Spleen (tissue), 13 donors: ENCODE measurements at regions of chr1 and their contacts with region 1.

Region 1: GRCh38 chr1:180415985-180416633 is 86.3 kb downstream of the ACBD6 start:
- DNase-seq: no peak
- H3K4me3 ChIP-seq: no peak overlapping the region
- H3K27ac ChIP-seq: peak overlapping the region in 2 of 8 donors; percentile 26 to 39
- H3K4me1 ChIP-seq: peaks cover 0 to 13% (median 0%) of the 10 kb centered on the region in 6 donors
- H3K27me3 ChIP-seq: no peaks in the 10 kb centered on the region
- CTCF ChIP-seq: peak in 10 of 11 experiments; percentile 15 to 73 (median 58)
- POLR2A ChIP-seq: no peak

Region 2: GRCh38 chr1:180116964-180117763 is 298.9 kb before region 1 on chr1:
- intact Hi-C with region 1: no loop called
- DNase-seq: no peak
- H3K4me3 ChIP-seq: no peak overlapping the region
- H3K27ac ChIP-seq: peak overlapping the region in 1 of 8 donors; percentile 6
- H3K4me1 ChIP-seq: peaks cover 0 to 16% (median 3%) of the 10 kb centered on the region in 6 donors
- H3K27me3 ChIP-seq: no peaks in the 10 kb centered on the region
- CTCF ChIP-seq: no peak
- POLR2A ChIP-seq: no peak

Region 3: GRCh38 chr1:180188091-180188506 is 228.0 kb before region 1 on chr1:
- intact Hi-C with region 1: loop called (anchors 5 kb)
- DNase-seq: no peak
- H3K4me3 ChIP-seq: no peak overlapping the region
- H3K27ac ChIP-seq: no peak overlapping the region
- H3K4me1 ChIP-seq: peaks cover 0 to 55% (median 13%) of the 10 kb centered on the region in 6 donors
- H3K27me3 ChIP-seq: no peaks in the 10 kb centered on the region
- CTCF ChIP-seq: peak; percentile 20 to 76 (median 56)
- POLR2A ChIP-seq: no peak

Region 4: DNA sequence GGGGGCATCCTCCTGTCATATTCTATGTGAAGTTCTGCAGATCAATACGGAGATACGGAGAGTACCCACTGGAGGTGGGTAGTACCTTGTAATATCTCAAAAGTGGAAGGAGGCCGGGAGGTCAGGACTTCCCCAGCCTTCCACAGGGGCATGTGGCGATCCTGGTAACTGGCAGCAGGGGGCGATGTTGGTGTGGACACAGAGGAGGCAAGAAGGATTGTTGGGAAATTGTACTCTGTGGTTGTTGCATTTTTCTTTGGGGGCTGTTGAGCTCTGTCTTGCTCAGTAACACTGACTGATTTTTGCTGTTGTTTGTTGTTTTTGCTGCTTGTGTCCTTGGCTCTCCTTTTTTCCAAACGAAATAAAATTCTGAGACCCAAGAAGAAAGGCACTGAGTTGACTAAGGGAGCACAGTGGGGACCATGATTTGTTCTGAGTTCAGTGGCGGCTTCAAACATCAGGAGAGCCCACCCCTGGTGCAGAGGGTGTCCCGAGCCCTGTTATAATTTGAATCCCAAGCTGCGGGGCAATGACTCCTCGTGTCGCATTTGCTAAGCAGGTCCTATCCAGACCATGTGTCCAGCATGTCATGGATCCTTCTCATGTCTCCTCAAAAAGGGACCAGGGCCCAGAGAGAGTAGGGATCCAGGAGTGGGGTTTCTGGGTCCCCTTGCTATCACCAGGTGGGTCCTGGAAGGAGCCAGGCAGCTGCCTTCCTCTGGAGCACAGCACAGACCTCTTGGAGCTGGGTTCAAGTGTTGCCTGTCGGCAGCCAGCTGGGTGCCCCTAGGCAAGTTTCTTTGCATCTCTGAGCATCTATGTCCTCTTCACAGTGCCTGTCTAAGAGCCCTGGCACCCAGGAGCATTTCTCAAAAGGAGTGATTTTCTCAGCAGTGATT is 163.2 kb before region 1 on chr1:
- intact Hi-C with region 1: loop called (anchors 10 kb)
- DNase-seq: peak; percentile 94
- H3K4me3 ChIP-seq: no peak overlapping the region
- H3K27ac ChIP-seq: peak overlapping the region in 1 of 8 donors; percentile 46
- H3K4me1 ChIP-seq: peaks cover 0 to 17% (median 7%) of the 10 kb centered on the region in 6 donors
- H3K27me3 ChIP-seq: peaks cover 0 to 64% (median 15%) of the 10 kb centered on the region in 7 donors
- CTCF ChIP-seq: peak; percentile 72 to 94 (median 86)
- POLR2A ChIP-seq: no peak

Region 5: GRCh38 chr1:180269761-180270527 is 146.2 kb before region 1 on chr1:
- intact Hi-C with region 1: no loop called
- DNase-seq: peak; percentile 59
- H3K4me3 ChIP-seq: no peak overlapping the region
- H3K27ac ChIP-seq: no peak overlapping the region
- H3K4me1 ChIP-seq: no peaks in the 10 kb centered on the region
- H3K27me3 ChIP-seq: no peaks in the 10 kb centered on the region
- CTCF ChIP-seq: no peak
- POLR2A ChIP-seq: no peak